Caco-2 (cell line): ENCODE measurements at regions of chr9 and their contacts with region 1.

Region 1: DNA sequence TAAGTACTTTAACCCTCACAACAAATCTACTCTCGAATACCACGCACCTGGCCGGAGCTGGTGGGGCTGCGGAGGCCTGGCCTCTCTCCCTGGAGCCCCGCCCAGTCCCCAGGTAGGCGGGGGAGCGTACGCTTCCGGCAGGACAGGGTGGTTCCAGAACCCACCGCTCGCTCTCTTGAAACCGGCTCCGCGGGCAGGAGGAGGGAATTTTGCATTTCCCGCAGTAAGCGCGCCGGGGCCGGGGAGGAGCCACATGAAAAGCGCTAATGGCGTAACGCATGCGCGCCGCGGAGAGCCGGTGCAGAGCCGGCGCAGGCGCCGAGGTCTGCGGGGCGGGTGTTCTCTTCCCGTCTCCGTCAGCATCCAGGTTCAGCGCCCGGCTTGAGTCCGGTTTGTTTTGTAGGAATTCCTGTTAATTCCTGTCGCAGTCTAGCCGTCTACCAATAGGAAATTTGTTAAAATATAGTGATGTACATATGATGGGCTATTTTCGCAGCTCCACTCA is 20.8 kb downstream of the CAVIN4 start:
- DNase-seq: peak; percentile 95
- H3K4me3 ChIP-seq: peak overlapping the region; percentile 52
- H3K4me3 Mint-ChIP-seq: peak overlapping the region; percentile 76
- H3K27ac Mint-ChIP-seq: peak overlapping the region; percentile 62
- H3K4me1 ChIP-seq: 0 out of 2 replicates have a peak, but pooled peaks cover 5% of the 10 kb centered on the region
- H3K4me1 Mint-ChIP-seq: peaks cover 20% of the 10 kb centered on the region
- H3K27me3 ChIP-seq: no peaks in the 10 kb centered on the region
- H3K27me3 Mint-ChIP-seq: no peaks in the 10 kb centered on the region
- CTCF ChIP-seq: no peak

Region 2: GRCh38 chr9:99819856-99820684 is 778.6 kb before region 1 on chr9:
- CTCF ChIA-PET with region 1: no interaction called
- POLR2A ChIA-PET with region 1: no interaction called
- intact Hi-C with region 1: loop called (anchors 5 kb)
- DNase-seq: peak; percentile 92 to 94
- H3K4me3 ChIP-seq: peak overlapping the region; percentile 95
- H3K4me3 Mint-ChIP-seq: peak overlapping the region; percentile 72
- H3K27ac Mint-ChIP-seq: peak overlapping the region; percentile 71
- H3K4me1 ChIP-seq: peaks cover 4% of the 10 kb centered on the region
- H3K4me1 Mint-ChIP-seq: peaks cover 7% of the 10 kb centered on the region
- H3K27me3 ChIP-seq: peaks cover 8% of the 10 kb centered on the region
- H3K27me3 Mint-ChIP-seq: peaks cover 3% of the 10 kb centered on the region
- CTCF ChIP-seq: no peak

Region 3: DNA sequence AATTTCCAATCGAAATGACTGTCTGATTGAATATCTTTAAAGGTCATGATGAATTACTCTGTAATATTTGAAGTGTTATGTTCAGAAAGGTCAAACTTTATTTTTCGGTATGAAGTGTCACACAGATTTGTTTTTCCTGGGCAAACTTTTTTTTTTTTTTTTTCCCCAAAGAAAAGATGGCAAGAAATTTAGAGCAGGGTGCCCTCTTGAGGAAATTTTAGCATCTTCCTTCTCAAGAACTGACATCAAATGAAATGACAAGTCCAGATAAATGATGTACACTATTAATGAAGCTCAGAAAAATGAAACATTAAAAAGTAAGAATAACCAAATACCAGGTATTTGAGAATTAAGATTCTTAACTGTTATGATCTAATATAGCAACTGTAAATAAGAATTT is 376.0 kb before region 1 on chr9:
- CTCF ChIA-PET with region 1: interaction called, 5 read pairs
- POLR2A ChIA-PET with region 1: no interaction called
- intact Hi-C with region 1: loop called (anchors 5 kb)
- DNase-seq: peak in 1 of 2 experiments; percentile 19
- H3K4me3 ChIP-seq: no peak overlapping the region
- H3K4me3 Mint-ChIP-seq: no peak overlapping the region
- H3K27ac Mint-ChIP-seq: no peak overlapping the region
- H3K4me1 ChIP-seq: no peaks in the 10 kb centered on the region
- H3K4me1 Mint-ChIP-seq: no peaks in the 10 kb centered on the region
- H3K27me3 ChIP-seq: no peaks in the 10 kb centered on the region
- H3K27me3 Mint-ChIP-seq: no peaks in the 10 kb centered on the region
- CTCF ChIP-seq: peak; percentile 23 to 44

Region 4: GRCh38 chr9:100445161-100445902 is 153.4 kb before region 1 on chr9:
- CTCF ChIA-PET with region 1: no interaction called
- POLR2A ChIA-PET with region 1: no interaction called
- intact Hi-C with region 1: loop called (anchors 1 kb)
- DNase-seq: no peak
- H3K4me3 ChIP-seq: no peak overlapping the region
- H3K4me3 Mint-ChIP-seq: no peak overlapping the region
- H3K27ac Mint-ChIP-seq: no peak overlapping the region
- H3K4me1 ChIP-seq: no peaks in the 10 kb centered on the region
- H3K4me1 Mint-ChIP-seq: no peaks in the 10 kb centered on the region
- H3K27me3 ChIP-seq: no peaks in the 10 kb centered on the region
- H3K27me3 Mint-ChIP-seq: no peaks in the 10 kb centered on the region
- CTCF ChIP-seq: no peak

Region 5: DNA sequence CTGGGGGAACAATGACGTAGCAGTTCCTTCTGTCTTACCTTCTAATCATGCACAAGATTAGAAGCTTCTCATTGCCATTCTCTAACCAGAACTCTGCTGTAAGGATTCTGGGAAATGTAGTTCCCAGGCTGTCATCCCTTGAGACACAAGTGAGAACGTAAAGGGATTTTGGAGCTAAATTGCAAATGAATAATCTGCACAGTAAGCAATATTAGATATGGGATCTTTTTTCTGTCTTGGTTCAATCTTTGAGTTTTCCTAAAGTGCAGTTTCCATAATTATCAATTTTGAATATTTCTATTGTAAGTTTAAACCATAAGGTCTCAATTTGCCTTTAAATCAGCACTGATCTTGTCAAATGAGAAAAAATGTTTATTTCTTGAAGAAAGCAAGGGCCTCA is 240.2 kb after region 1 on chr9:
- CTCF ChIA-PET with region 1: no interaction called
- POLR2A ChIA-PET with region 1: no interaction called
- intact Hi-C with region 1: loop called (anchors 10 kb)
- DNase-seq: no peak
- H3K4me3 ChIP-seq: no peak overlapping the region
- H3K4me3 Mint-ChIP-seq: no peak overlapping the region
- H3K27ac Mint-ChIP-seq: no peak overlapping the region
- H3K4me1 ChIP-seq: no peaks in the 10 kb centered on the region
- H3K4me1 Mint-ChIP-seq: no peaks in the 10 kb centered on the region
- H3K27me3 ChIP-seq: no peaks in the 10 kb centered on the region
- H3K27me3 Mint-ChIP-seq: no peaks in the 10 kb centered on the region
- CTCF ChIP-seq: no peak

Region 6: DNA sequence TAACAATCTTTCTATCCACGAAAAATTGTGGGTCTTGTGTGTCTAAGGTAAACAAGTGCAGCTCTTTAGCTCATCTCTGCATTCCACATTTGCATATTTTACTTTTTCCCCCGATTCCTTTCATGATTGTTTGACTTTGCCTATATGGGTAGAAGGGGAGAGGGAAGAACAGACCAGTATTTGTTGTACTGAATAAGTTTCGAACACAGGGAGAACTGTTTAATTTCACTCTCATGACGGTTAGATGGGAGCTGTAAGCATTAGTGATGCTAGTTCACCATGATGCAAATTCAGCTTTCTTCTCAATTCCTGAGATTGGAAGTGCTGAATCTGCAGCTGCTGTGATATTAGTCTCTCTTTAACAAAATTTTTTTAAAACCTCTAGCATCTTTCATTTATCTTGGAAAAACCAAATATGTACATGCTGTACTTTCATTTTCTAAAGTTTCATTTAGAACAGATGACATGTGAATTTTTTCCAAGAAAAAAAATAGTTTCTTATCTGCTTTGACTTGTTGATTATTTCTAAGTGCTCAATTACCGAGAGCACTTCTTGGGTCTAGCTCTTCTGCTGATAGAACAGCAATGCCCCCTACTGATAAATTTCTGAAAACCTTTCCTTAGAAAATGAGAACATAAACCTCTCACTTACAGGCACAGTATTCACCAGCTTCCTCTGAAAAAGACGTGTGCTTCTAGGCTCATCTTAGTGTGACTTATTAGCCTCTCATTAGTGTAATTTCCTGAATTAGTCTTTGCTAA is 636.6 kb after region 1 on chr9:
- CTCF ChIA-PET with region 1: interaction called, 3 read pairs
- POLR2A ChIA-PET with region 1: no interaction called
- intact Hi-C with region 1: loop called (anchors 1 kb)
- DNase-seq: peak in 1 of 2 experiments; percentile 16
- H3K4me3 ChIP-seq: no peak overlapping the region
- H3K4me3 Mint-ChIP-seq: no peak overlapping the region
- H3K27ac Mint-ChIP-seq: no peak overlapping the region
- H3K4me1 ChIP-seq: no peaks in the 10 kb centered on the region
- H3K4me1 Mint-ChIP-seq: no peaks in the 10 kb centered on the region
- H3K27me3 ChIP-seq: no peaks in the 10 kb centered on the region
- H3K27me3 Mint-ChIP-seq: peaks cover 5% of the 10 kb centered on the region
- CTCF ChIP-seq: peak; percentile 48 to 56

Region 7: GRCh38 chr9:101530077-101530711 is 931.5 kb after region 1 on chr9:
- CTCF ChIA-PET with region 1: no interaction called
- POLR2A ChIA-PET with region 1: no interaction called
- intact Hi-C with region 1: loop called (anchors 5 kb)
- DNase-seq: peak; percentile 71 to 81
- H3K4me3 ChIP-seq: no peak overlapping the region
- H3K4me3 Mint-ChIP-seq: no peak overlapping the region
- H3K27ac Mint-ChIP-seq: no peak overlapping the region
- H3K4me1 ChIP-seq: no peaks in the 10 kb centered on the region
- H3K4me1 Mint-ChIP-seq: no peaks in the 10 kb centered on the region
- H3K27me3 ChIP-seq: no peaks in the 10 kb centered on the region
- H3K27me3 Mint-ChIP-seq: no peaks in the 10 kb centered on the region
- CTCF ChIP-seq: peak; percentile 80 to 82